ENCODE measurements at regions of chr9 and their contacts with region 1.

Region 1: GRCh38 chr9:105842023-105842644 is 147.8 kb downstream of the TMEM38B start:
- DNase-seq: peak; percentile 57
- ATAC-seq: no peak
- H3K4me3 Mint-ChIP-seq: no peak overlapping the region
- H3K27ac Mint-ChIP-seq: no peak overlapping the region
- H3K4me1 Mint-ChIP-seq: no peaks in the 10 kb centered on the region
- H3K27me3 Mint-ChIP-seq: no peaks in the 10 kb centered on the region

Region 2: DNA sequence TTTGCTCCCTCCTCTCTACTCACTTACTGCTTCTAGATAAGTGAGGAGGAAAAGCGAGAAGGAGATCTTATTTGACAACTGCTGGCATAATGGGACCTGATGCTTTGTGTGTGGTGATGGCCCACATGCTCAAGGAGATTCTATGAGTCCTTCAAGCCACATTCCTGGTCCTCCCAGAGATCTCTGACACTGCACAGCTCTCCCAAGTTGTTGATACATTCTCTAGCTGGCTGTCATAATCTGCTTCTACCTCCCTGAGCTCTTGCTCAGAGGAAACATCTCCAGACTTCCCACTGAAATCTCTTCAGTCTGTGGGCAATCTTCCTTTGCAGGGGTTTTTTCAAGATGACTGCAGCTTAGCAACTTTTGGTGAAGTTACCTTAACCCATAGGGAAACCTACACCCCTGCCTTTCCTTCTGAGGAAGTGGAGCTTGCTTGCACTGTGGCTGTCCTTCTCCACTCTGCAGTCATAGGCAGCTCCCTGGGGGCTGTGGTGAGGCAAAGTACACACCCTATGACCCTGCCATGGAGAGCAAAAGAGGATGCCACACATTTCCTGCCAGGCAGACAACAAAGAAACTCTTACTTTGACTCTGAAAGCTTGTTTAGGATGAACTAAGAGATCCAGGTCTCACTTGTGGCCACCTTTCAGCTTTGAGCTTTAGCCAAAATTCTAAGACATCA is 16.0 kb after region 1 on chr9:
- CTCF ChIA-PET with region 1: interaction called, 16 read pairs
- POLR2A ChIA-PET with region 1: no interaction called
- DNase-seq: peak; percentile 65
- ATAC-seq: peak; percentile 83
- H3K4me3 Mint-ChIP-seq: peak overlapping the region; percentile 29
- H3K27ac Mint-ChIP-seq: peak overlapping the region; percentile 83
- H3K4me1 Mint-ChIP-seq: peaks cover 27% of the 10 kb centered on the region
- H3K27me3 Mint-ChIP-seq: peaks cover 21% of the 10 kb centered on the region

Region 3: DNA sequence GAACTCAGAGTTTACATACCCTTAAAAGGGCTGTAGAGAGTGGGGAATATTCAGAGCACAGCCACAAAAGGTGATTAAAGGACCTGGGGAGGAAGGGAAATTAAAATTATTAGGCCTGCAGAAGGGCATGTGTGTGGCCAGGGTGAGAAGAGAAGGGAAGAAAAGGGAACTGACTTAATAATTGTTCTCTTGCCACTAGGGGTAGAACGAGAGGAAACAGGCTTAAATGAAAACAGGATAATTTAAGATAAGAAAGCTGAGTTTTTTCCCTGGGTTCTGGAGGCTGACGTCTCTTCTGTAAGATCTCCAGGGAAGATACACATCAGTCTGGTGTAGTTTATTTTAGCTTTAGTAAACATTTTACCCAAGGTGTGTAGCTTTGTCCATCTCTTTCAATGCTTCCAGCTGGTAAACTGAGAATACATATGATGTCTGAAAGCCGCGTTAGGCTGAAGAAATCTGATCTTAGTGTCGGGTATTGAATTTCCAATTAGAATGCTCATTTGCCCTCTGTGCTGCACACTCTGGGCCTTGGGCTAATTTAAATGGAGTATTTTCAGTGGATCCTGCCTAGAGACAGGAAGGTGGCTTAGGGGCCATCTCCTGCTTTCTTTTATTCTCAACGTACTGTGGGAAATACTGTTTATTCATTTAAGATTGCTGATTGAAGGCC is 269.0 kb after region 1 on chr9:
- CTCF ChIA-PET with region 1: no interaction called
- POLR2A ChIA-PET with region 1: no interaction called
- DNase-seq: no peak
- ATAC-seq: no peak
- H3K4me3 Mint-ChIP-seq: no peak overlapping the region
- H3K27ac Mint-ChIP-seq: no peak overlapping the region
- H3K4me1 Mint-ChIP-seq: no peaks in the 10 kb centered on the region
- H3K27me3 Mint-ChIP-seq: no peaks in the 10 kb centered on the region

Measured in activated CD8-positive, alpha-beta T cell treated with anti-CD3 and anti-CD28 coated beads, Interleukin-2, amount 10 ng/mL, durations not matched to agents 7 days and 5 days (primary cell).